ENCODE measurements at regions of chr17 and their contacts with region 1.

Region 1: DNA sequence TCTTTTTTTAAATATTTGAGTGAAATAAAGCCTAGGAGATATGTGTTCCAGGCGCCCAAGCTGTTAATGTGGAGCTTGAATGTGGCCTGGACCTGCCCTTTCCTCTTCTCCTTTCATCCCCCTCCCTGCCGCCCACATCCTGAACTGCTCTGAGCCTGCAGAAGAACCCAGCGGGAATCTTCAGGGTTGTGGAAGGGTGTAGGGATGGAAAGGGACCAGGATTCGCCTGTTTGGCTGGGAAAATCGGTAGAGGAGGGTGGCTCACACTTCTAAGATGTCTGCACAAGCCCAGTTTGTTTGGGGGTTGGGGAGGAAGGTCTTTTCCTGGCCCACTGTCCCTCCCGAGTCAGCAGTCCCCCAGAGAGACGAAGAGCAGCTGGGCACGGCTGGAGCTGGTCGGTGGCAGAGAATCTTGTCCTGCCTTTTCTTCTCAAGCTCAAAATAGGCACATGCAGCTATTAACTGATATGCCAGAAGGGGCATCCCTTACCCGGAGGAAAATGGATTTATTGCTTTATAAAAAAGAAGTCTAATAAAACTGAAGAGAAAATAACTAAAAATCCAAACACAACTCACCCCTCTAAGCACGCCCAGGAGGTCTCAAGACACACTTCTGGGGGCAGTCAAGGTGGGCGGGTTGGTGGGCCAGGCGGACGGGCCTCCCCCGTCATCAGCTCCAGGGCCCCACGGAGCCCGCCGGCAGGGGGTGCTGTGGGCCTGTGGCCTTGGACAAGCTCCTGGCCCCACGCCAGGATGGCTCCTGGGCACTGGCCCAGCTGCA is 11.5 kb upstream of the PITPNA start:
- DNase-seq: peak; percentile 79 to 93 (median 90)
- H3K4me3 ChIP-seq: no peak overlapping the region
- H3K27ac ChIP-seq: peak overlapping the region in 3 of 5 donors; percentile 41 to 90 (median 79)
- H3K4me1 ChIP-seq: peaks cover 16 to 43% of the 10 kb centered on the region in 2 donors
- H3K27me3 ChIP-seq: no peaks in the 10 kb centered on the region
- CTCF ChIP-seq: peak; percentile 87 to 97 (median 96)
- POLR2A ChIP-seq: no peak

Region 2: GRCh38 chr17:1628856-1629646 is 54.9 kb after region 1 on chr17:
- intact Hi-C with region 1: loop called (anchors 2 to 5 kb)
- DNase-seq: peak; percentile 93 to 98 (median 95)
- H3K4me3 ChIP-seq: peak overlapping the region in 3 of 4 donors; percentile 33 to 82 (median 64)
- H3K27ac ChIP-seq: peak overlapping the region; percentile 53 to 96 (median 71)
- H3K4me1 ChIP-seq: peaks cover 10 to 38% of the 10 kb centered on the region in 2 donors
- H3K27me3 ChIP-seq: no peaks in the 10 kb centered on the region
- CTCF ChIP-seq: peak in 3 of 6 experiments; percentile 34 to 53 (median 38)
- POLR2A ChIP-seq: peak; percentile 8 to 51

Region 3: GRCh38 chr17:1648963-1649843 is 75.1 kb after region 1 on chr17:
- intact Hi-C with region 1: loop called in 1 of 2 experiments (anchors 5 kb)
- DNase-seq: peak; percentile 90 to 98 (median 96)
- H3K4me3 ChIP-seq: peak overlapping the region in 3 of 4 donors; percentile 60 to 71 (median 70)
- H3K27ac ChIP-seq: peak overlapping the region; percentile 87 to 98 (median 96)
- H3K4me1 ChIP-seq: peaks cover 21 to 40% of the 10 kb centered on the region in 2 donors
- H3K27me3 ChIP-seq: no peaks in the 10 kb centered on the region
- CTCF ChIP-seq: peak in 2 of 6 experiments; percentile 15 to 88
- POLR2A ChIP-seq: peak; percentile 24 to 86

Measured in adrenal gland (tissue), 19 donors.